PC-3 (cell line): ENCODE measurements at regions of chr11 and their contacts with region 1.

Region 1: GRCh38 chr11:128522055-128522942 is 65.1 kb downstream of the ETS1 start:
- DNase-seq: peak; percentile 99
- ATAC-seq: peak; percentile 80
- H3K4me3 ChIP-seq: peak overlapping the region; percentile 77
- H3K27ac ChIP-seq: peak overlapping the region; percentile 90
- H3K4me1 ChIP-seq: peaks cover 68% of the 10 kb centered on the region
- H3K27me3 ChIP-seq: no peaks in the 10 kb centered on the region
- CTCF ChIP-seq: no peak

Region 2: GRCh38 chr11:126898802-126899201 is 1623.5 kb before region 1 on chr11:
- CTCF ChIA-PET with region 1: no interaction called
- POLR2A ChIA-PET with region 1: no interaction called
- intact Hi-C with region 1: no loop called
- DNase-seq: no peak
- ATAC-seq: no peak
- H3K4me3 ChIP-seq: no peak overlapping the region
- H3K27ac ChIP-seq: no peak overlapping the region
- H3K4me1 ChIP-seq: no peaks in the 10 kb centered on the region
- H3K27me3 ChIP-seq: peaks cover 25% of the 10 kb centered on the region
- CTCF ChIP-seq: no peak

Region 3: DNA sequence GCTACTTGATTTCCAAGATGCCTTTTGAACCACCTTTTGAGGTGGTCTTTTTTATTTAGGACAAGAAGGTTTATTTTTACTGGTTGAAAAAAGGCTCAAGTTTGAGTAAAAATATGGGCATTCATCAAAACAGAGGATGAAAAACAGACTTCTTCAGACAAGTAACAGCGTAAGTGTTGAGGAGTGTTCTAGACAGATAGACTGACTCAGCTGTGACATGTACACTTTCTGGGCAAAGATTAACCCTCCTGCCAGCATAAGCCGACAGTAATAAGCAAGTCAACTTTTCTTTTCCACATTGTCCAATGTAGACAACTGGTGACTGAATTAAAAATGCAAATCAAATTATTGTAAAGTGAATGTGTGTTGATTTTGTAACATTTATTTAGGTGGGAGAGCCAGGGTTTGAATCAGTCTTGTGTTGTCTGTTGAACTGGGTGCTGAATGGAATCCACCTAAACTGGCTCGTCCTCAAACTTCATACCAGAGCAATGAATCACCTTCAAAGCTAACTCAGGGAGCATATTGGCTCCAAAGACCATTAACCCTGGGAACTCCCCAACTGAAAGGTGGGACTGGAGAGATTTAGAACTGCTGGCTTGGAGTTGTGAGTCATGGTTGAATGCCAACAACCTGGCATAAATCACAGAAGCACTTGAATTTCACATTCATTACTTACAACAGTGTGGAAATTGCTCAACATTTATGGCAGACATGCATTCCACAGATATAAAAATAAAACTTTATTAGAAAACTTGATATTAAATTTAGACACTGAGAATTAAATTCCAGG is 312.0 kb before region 1 on chr11:
- CTCF ChIA-PET with region 1: no interaction called
- POLR2A ChIA-PET with region 1: interaction called, 3 read pairs
- intact Hi-C with region 1: loop called (anchors 1 kb)
- DNase-seq: peak; percentile 100
- ATAC-seq: peak; percentile 62
- H3K4me3 ChIP-seq: peak overlapping the region; percentile 42
- H3K27ac ChIP-seq: peak overlapping the region; percentile 97
- H3K4me1 ChIP-seq: peaks cover 51% of the 10 kb centered on the region
- H3K27me3 ChIP-seq: no peaks in the 10 kb centered on the region
- CTCF ChIP-seq: no peak

Region 4: GRCh38 chr11:128342511-128343134 is 179.7 kb before region 1 on chr11:
- CTCF ChIA-PET with region 1: no interaction called
- POLR2A ChIA-PET with region 1: interaction called, 4 read pairs
- intact Hi-C with region 1: loop called (anchors 2 kb)
- DNase-seq: peak; percentile 96
- ATAC-seq: peak; percentile 91
- H3K4me3 ChIP-seq: no peak overlapping the region
- H3K27ac ChIP-seq: peak overlapping the region; percentile 95
- H3K4me1 ChIP-seq: peaks cover 59% of the 10 kb centered on the region
- H3K27me3 ChIP-seq: no peaks in the 10 kb centered on the region
- CTCF ChIP-seq: no peak

Region 5: DNA sequence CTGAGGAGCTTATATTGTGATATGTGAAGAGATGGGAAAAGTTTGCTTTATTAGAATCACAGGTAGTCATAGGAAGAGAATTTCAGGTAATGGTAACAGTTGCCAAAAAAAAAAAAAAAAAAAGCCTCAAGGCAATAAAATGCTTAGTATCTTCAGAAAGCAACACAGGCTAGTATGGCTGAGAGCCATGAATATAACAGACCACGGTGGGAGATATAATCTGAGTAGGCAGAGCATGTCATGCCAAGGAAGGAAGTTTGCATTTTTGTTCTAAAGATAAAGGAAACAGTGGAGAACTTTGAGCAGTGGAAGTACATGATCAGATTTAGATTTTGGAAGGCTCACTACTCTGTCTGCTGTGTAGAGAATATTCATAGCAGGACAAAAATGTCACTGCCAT is 146.3 kb before region 1 on chr11:
- CTCF ChIA-PET with region 1: no interaction called
- POLR2A ChIA-PET with region 1: no interaction called
- intact Hi-C with region 1: no loop called
- DNase-seq: peak; percentile 92
- ATAC-seq: peak; percentile 49
- H3K4me3 ChIP-seq: no peak overlapping the region
- H3K27ac ChIP-seq: peak overlapping the region; percentile 11
- H3K4me1 ChIP-seq: peaks cover 25% of the 10 kb centered on the region
- H3K27me3 ChIP-seq: no peaks in the 10 kb centered on the region
- CTCF ChIP-seq: no peak

Region 6: DNA sequence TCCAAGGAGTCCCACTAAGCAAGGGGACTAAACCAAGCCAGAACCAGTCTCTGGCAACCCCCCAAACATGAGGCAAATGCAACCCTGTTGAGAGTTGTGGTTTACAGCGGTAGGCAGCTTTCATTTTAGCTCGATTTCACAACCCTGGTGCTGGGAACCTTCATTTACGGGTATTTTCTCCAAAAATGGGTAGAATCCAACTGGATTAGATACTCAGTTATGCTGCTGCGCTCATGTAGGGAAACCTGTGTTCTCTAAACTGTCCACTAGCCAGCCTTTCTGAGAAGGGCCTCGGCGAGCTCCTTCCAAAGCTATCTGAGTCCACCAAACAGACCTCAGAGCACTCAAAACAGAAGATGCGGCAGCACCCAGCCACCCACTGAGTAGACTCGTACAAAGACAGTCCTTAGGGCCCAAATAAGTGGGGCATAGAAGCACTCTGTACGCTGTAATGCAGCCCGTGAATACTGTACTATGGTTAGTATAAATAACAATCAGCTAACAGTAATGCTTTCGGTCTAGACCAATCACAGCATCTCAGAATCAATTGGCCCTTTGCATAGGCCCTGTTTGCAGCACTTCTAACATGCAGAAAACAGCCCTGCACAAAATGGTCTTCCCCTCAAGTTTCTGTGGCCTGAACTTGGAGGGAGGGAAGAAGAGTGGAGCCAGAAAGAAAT is 39.6 kb before region 1 on chr11:
- CTCF ChIA-PET with region 1: interaction called, 4 read pairs
- POLR2A ChIA-PET with region 1: no interaction called
- intact Hi-C with region 1: loop called (anchors 5 kb)
- DNase-seq: no peak
- ATAC-seq: no peak
- H3K4me3 ChIP-seq: no peak overlapping the region
- H3K27ac ChIP-seq: no peak overlapping the region
- H3K4me1 ChIP-seq: no peaks in the 10 kb centered on the region
- H3K27me3 ChIP-seq: no peaks in the 10 kb centered on the region
- CTCF ChIP-seq: no peak

Region 7: DNA sequence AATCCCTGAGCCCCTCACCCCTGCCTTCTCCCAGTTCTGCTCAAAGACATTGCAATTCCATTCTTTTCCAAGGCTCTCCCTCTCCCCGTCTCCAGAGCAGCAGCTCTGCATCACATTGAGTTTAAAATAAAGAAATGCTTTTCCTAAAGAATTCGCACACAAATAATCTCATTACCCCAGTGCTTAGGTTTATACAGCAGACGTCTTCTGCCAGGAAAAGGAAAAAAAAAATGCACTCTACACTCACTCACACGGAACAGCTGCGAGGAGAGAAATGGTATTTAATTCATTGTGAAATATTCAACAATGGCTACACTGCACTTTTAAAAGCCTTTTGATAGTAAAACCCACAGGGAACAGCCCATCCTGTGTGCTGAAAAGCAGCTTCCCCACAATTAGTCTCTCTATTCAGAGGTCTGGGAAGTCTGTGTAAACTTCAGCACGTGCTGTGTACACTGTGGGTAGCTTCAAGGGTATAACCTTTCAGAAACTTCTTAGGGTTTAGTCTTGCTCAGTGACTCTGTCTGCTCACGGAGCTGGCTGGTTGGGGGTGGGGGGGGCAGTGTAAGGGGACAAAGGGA is 22.3 kb after region 1 on chr11:
- CTCF ChIA-PET with region 1: no interaction called
- POLR2A ChIA-PET with region 1: interaction called, 12 read pairs
- intact Hi-C with region 1: no loop called
- DNase-seq: no peak
- ATAC-seq: no peak
- H3K4me3 ChIP-seq: no peak overlapping the region
- H3K27ac ChIP-seq: no peak overlapping the region
- H3K4me1 ChIP-seq: no peaks in the 10 kb centered on the region
- H3K27me3 ChIP-seq: no peaks in the 10 kb centered on the region
- CTCF ChIP-seq: no peak

Region 8: DNA sequence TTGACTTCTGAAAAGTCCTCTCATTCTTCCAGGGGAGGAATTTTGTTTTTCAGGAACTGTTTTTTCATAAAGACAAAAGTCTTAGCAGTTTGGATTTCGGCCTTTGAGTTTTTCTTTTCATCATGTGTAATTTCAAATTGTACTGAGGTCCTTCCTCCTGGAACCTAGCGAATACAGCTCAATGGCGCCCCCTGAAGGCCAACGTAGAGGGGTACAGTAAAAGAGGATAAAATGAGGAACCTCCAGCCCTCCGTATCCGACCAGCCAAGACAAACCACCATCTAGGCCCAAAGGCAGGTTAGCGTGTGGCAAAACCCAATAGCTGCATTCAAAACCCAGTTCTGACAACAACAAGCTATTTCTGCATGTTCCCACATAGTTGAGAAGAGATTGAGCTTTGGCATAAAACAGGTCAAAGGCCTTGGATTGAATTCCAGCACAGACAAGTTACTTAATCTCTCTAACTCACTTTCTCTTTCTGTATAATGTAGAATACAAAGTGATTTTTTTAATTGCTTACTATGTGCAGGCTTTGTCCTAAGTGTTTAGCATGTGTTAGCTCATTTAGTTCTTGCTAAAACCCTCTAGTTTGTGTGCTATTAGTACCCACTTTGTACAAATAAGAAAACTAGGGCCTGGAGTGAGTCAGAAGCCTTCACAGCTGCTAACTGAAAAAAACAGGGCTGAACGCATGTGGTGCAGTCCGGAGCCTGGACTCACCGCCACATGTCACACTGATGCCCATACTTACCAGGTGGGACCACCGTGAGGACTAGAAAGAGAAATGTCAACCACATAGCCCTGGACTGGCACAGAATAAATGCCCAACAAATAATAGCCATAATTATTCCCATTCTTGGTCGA is 108.3 kb after region 1 on chr11:
- CTCF ChIA-PET with region 1: interaction called, 5 read pairs
- POLR2A ChIA-PET with region 1: no interaction called
- intact Hi-C with region 1: loop called (anchors 1 kb)
- DNase-seq: peak; percentile 92
- ATAC-seq: peak; percentile 94
- H3K4me3 ChIP-seq: no peak overlapping the region; the same call in 1 of the 2 replicates
- H3K27ac ChIP-seq: no peak overlapping the region
- H3K4me1 ChIP-seq: peaks cover 17% of the 10 kb centered on the region
- H3K27me3 ChIP-seq: no peaks in the 10 kb centered on the region
- CTCF ChIP-seq: peak; percentile 98